Naive thymus-derived CD4-positive, alpha-beta T cell (primary cell): ENCODE measurements at regions of chr7 and their contacts with region 1.

Region 1: DNA sequence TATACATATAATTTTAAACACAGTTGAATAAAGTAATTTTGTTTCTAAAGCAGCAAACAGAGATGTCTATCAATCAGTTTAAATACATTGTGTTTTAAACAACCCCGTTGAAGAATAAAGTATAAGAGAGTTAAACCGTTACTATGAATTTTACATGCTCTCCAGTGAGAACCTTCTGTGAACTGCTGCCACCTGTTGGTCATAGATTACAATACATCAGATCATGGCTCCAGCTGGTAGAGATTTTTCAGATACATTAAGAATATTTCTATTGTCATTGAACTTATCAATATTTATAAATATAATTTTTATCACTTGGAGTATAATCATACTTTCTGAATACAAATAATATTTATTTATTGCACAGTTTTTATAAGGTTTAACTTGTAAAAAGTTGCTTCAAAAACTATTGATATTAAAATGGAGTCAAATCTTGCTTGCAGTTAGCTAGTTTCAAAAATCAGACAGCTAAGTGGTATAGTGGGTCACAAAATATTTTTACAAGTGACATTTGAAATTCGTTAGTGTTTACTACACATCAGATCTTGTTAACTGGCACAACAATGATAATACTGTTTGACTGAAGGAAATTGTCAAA is 561.2 kb upstream of the PHF14 start:
- DNase-seq: peak in 3 of 9 donors; percentile 4 to 15 (median 6)
- ATAC-seq: peak; percentile 45
- H3K4me3 ChIP-seq: no peak overlapping the region
- H3K4me3 Mint-ChIP-seq: no peak overlapping the region
- H3K27ac ChIP-seq: no peak overlapping the region
- H3K27ac Mint-ChIP-seq: no peak overlapping the region
- H3K4me1 ChIP-seq: no peaks in the 10 kb centered on the region
- H3K4me1 Mint-ChIP-seq: no peaks in the 10 kb centered on the region
- H3K27me3 ChIP-seq: no peaks in the 10 kb centered on the region
- H3K27me3 Mint-ChIP-seq: peaks cover 0 to 4% (median 0%) of the 10 kb centered on the region in 5 donors

Region 2: DNA sequence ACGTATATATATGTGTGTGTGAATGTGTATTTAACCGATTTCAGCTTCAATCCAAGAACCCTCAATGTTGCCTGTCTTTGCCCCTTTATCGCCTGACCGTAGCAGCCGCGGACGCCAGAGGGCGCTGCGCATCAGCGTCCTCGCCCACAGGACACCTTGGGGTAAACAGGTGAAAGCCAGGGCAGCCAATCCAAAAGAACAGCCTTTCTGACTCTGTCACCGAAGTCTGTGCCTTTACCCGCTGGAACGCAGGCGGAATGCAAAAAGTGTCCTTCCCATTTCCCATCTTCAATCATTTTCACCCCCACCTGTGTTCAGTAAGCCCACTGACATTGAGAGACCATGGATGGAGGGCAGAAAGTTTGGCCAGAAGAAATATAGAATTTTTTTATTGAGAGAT is 1975.6 kb before region 1 on chr7:
- CTCF ChIA-PET with region 1: no interaction called
- POLR2A ChIA-PET with region 1: no interaction called
- intact Hi-C with region 1: loop called in 1 of 2 experiments (anchors 5 kb)
- DNase-seq: peak in 3 of 9 donors; percentile 3 to 48 (median 5)
- ATAC-seq: no peak
- H3K4me3 ChIP-seq: no peak overlapping the region
- H3K4me3 Mint-ChIP-seq: peak overlapping the region in 6 of 10 donors; percentile 9 to 65 (median 36)
- H3K27ac ChIP-seq: no peak overlapping the region
- H3K27ac Mint-ChIP-seq: no peak overlapping the region
- H3K4me1 ChIP-seq: no peaks in the 10 kb centered on the region
- H3K4me1 Mint-ChIP-seq: peaks cover 8 to 31% (median 26%) of the 10 kb centered on the region in 7 donors
- H3K27me3 ChIP-seq: peaks cover 2 to 33% of the 10 kb centered on the region in 2 donors
- H3K27me3 Mint-ChIP-seq: peaks cover 89 to 96% (median 94%) of the 10 kb centered on the region in 5 donors

Region 3: GRCh38 chr7:9671979-9672917 is 740.3 kb before region 1 on chr7:
- CTCF ChIA-PET with region 1: no interaction called
- POLR2A ChIA-PET with region 1: no interaction called
- intact Hi-C with region 1: loop called in 1 of 2 experiments (anchors 10 kb)
- DNase-seq: no peak
- ATAC-seq: no peak
- H3K4me3 ChIP-seq: no peak overlapping the region
- H3K4me3 Mint-ChIP-seq: no peak overlapping the region
- H3K27ac ChIP-seq: no peak overlapping the region
- H3K27ac Mint-ChIP-seq: no peak overlapping the region
- H3K4me1 ChIP-seq: no peaks in the 10 kb centered on the region
- H3K4me1 Mint-ChIP-seq: no peaks in the 10 kb centered on the region
- H3K27me3 ChIP-seq: no peaks in the 10 kb centered on the region
- H3K27me3 Mint-ChIP-seq: no peaks in the 10 kb centered on the region

Region 4: DNA sequence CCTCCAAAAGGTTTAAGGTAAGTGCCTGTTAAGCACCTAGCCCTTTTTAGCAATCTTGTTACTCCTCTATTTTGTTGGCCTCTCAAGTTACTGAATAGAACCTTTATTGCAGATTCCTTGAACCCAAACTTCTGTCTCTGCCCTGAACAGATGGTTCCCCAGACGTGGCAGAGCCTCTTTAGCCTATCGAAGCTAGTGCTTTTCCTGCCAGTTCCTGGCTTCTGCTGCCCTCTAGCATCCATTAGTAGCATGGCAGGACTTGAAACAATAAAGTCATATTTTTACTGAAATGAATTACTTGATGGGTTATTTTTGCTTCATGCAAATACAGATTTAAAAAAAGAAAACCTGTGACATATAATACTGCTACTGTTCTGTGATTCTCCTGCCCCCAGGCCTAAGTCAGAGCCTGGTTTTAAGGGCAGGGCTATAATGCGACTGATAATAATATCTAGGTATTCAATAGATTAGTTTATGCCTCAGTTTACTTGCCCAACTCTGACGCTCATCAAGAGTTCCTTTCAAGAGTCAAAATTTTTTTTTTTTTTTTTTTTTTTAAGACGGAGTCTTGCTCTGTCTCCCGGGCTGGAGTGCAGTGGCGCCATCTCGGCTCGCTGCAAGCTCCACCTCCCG is 476.9 kb after region 1 on chr7:
- CTCF ChIA-PET with region 1: no interaction called
- POLR2A ChIA-PET with region 1: no interaction called
- intact Hi-C with region 1: loop called in 1 of 2 experiments (anchors 5 kb)
- DNase-seq: peak in 8 of 9 donors; percentile 6 to 55 (median 34)
- ATAC-seq: peak; percentile 87
- H3K4me3 ChIP-seq: peak overlapping the region; percentile 16
- H3K4me3 Mint-ChIP-seq: peak overlapping the region; percentile 32 to 74 (median 61)
- H3K27ac ChIP-seq: no peak overlapping the region
- H3K27ac Mint-ChIP-seq: peak overlapping the region in 1 of 9 donors; percentile 21
- H3K4me1 ChIP-seq: peaks cover 5 to 8% of the 10 kb centered on the region in 2 donors
- H3K4me1 Mint-ChIP-seq: peaks cover 6 to 13% (median 11%) of the 10 kb centered on the region in 7 donors
- H3K27me3 ChIP-seq: no peaks in the 10 kb centered on the region
- H3K27me3 Mint-ChIP-seq: peaks cover 0 to 3% (median 0%) of the 10 kb centered on the region in 5 donors

Region 5: GRCh38 chr7:11212080-11212711 is 799.7 kb after region 1 on chr7:
- CTCF ChIA-PET with region 1: no interaction called
- POLR2A ChIA-PET with region 1: no interaction called
- intact Hi-C with region 1: loop called in 1 of 2 experiments (anchors 5 kb)
- DNase-seq: peak in 8 of 9 donors; percentile 2 to 51 (median 37)
- ATAC-seq: peak; percentile 73
- H3K4me3 ChIP-seq: no peak overlapping the region
- H3K4me3 Mint-ChIP-seq: no peak overlapping the region
- H3K27ac ChIP-seq: no peak overlapping the region
- H3K27ac Mint-ChIP-seq: no peak overlapping the region
- H3K4me1 ChIP-seq: no peaks in the 10 kb centered on the region
- H3K4me1 Mint-ChIP-seq: peaks cover 0 to 4% (median 0%) of the 10 kb centered on the region in 7 donors
- H3K27me3 ChIP-seq: no peaks in the 10 kb centered on the region
- H3K27me3 Mint-ChIP-seq: peaks cover 0 to 20% (median 5%) of the 10 kb centered on the region in 5 donors